ENCODE measurements at regions of chr11 and their contacts with region 1.

Region 1: GRCh38 chr11:20647976-20648565 is 21.3 kb upstream of the NELL1 start:
- DNase-seq: peak; percentile 52
- H3K4me3 ChIP-seq: no peak overlapping the region
- H3K27ac ChIP-seq: no peak overlapping the region
- H3K4me1 ChIP-seq: no peaks in the 10 kb centered on the region
- H3K27me3 ChIP-seq: no peaks in the 10 kb centered on the region

Region 2: GRCh38 chr11:20783220-20783619 is 135.1 kb after region 1 on chr11:
- in situ Hi-C with region 1: no loop called
- DNase-seq: no peak
- H3K4me3 ChIP-seq: no peak overlapping the region
- H3K27ac ChIP-seq: no peak overlapping the region
- H3K4me1 ChIP-seq: no peaks in the 10 kb centered on the region
- H3K27me3 ChIP-seq: no peaks in the 10 kb centered on the region

Region 3: GRCh38 chr11:21511835-21512440 is 863.9 kb after region 1 on chr11:
- in situ Hi-C with region 1: loop called (anchors 25 kb)
- DNase-seq: peak; percentile 78
- H3K4me3 ChIP-seq: no peak overlapping the region
- H3K27ac ChIP-seq: no peak overlapping the region
- H3K4me1 ChIP-seq: no peaks in the 10 kb centered on the region
- H3K27me3 ChIP-seq: no peaks in the 10 kb centered on the region

Measured in GM23248 (cell line).